ENCODE measurements at regions of chr3 and their contacts with region 1.

Region 1: GRCh38 chr3:95615592-95616310 is 1198.6 kb upstream of the EPHA6 start:
- DNase-seq: no peak
- ATAC-seq: no peak

Region 2: GRCh38 chr3:95120921-95121320 is 494.8 kb before region 1 on chr3:
- intact Hi-C with region 1: loop called (anchors 5 kb)
- DNase-seq: no peak
- ATAC-seq: no peak

Region 3: GRCh38 chr3:95567346-95567745 is 48.4 kb before region 1 on chr3:
- intact Hi-C with region 1: no loop called
- DNase-seq: no peak
- ATAC-seq: no peak